GM12878 (cell line): ENCODE measurements at regions of chr2 and their contacts with region 1.

Region 1: GRCh38 chr2:129483366-129483765 is 496.1 kb upstream of the RAB6C start:
- DNase-seq: peak; percentile 37
- ATAC-seq: peak; percentile 94
- H3K4me3 ChIP-seq: no peak overlapping the region
- H3K27ac ChIP-seq: no peak overlapping the region
- H3K4me1 ChIP-seq: peaks cover 4% of the 10 kb centered on the region
- H3K27me3 ChIP-seq: no peaks in the 10 kb centered on the region
- CTCF ChIP-seq: no peak
- EP300 ChIP-seq: peak; percentile 49 to 63; a peak in 2 of 4 replicates
- POLR2A ChIP-seq: no peak
- RAD21 ChIP-seq: no peak

Region 2: DNA sequence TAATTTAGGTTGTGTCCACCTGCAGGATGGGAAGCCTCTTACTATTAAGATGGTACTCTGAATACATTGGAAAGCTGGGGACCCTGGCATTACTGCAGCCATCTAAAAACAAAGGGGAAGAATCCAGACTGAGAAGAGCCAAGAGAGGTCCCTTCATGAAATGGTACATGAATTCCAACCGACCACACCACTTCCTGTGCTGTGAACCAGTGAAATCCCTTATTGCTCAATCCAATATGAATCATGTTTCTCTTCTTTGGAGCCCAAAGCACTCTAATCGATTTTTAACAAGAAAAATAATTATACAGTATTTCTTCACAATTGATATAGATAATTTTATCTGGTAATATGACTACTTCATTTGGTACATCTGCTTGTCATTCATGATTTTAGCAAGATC is 16.4 kb after region 1 on chr2:
- CTCF ChIA-PET with region 1: no interaction called
- POLR2A ChIA-PET with region 1: no interaction called
- RAD21 ChIA-PET with region 1: no interaction called
- SMC1A ChIA-PET with region 1: interaction called, 3 read pairs
- in situ Hi-C with region 1: no loop called
- intact Hi-C with region 1: loop called (anchors 1 kb)
- DNase-seq: no peak
- ATAC-seq: no peak
- H3K4me3 ChIP-seq: no peak overlapping the region
- H3K27ac ChIP-seq: no peak overlapping the region
- H3K4me1 ChIP-seq: no peaks in the 10 kb centered on the region
- H3K27me3 ChIP-seq: no peaks in the 10 kb centered on the region; a peak in 1 of 4 replicates
- CTCF ChIP-seq: no peak
- EP300 ChIP-seq: no peak
- POLR2A ChIP-seq: no peak
- RAD21 ChIP-seq: no peak

Region 3: GRCh38 chr2:130310881-130311280 is 827.5 kb after region 1 on chr2:
- CTCF ChIA-PET with region 1: no interaction called
- POLR2A ChIA-PET with region 1: no interaction called
- RAD21 ChIA-PET with region 1: no interaction called
- SMC1A ChIA-PET with region 1: no interaction called
- in situ Hi-C with region 1: no loop called
- intact Hi-C with region 1: no loop called
- DNase-seq: no peak
- ATAC-seq: no peak
- H3K4me3 ChIP-seq: no peak overlapping the region
- H3K27ac ChIP-seq: no peak overlapping the region
- H3K4me1 ChIP-seq: no peaks in the 10 kb centered on the region
- H3K27me3 ChIP-seq: no peaks in the 10 kb centered on the region; a peak in 1 of 4 replicates
- CTCF ChIP-seq: no peak
- EP300 ChIP-seq: no peak
- POLR2A ChIP-seq: no peak
- RAD21 ChIP-seq: no peak